Heart right ventricle (tissue), 16 donors: ENCODE measurements at regions of chr4 and their contacts with region 1.

Region 1: DNA sequence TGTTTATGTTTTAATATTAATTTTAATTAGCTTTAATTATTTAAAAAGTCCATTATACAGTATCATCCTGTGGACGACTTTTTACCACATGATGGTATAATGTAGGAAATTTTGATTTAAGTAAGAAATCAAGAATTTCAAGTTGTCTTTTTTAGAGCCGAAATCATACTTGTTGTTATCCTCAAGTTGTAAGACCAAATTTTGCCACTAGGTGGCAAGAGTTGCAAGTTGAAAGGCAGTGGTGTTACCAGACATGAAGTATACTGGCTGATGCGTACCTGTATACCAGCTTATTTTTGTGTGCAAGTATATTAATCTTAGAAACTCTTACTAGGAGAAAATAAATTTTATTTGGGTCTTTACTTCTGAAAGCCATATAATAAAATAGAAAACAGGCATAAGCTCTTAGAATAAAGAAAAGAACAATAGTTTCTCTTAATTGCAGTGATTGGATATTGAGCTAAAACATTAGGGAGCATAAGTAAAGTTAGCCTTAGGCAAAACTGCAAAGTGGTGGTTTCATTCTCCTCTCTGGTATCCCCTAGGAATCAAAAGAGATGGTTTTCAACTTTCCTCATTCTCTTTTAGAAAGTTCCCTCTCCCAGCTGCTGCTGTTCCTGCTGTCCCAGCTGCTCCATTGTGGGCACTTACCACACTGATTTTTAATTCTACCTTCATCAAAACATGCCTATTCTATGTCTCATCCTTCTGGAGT is 118.0 kb upstream of the WDFY3 start:
- DNase-seq: peak in 1 of 2 donors; percentile 55
- ATAC-seq: peak in 4 of 8 donors; percentile 48 to 73 (median 59)
- H3K4me3 ChIP-seq: no peak overlapping the region
- H3K27ac ChIP-seq: no peak overlapping the region
- H3K4me1 ChIP-seq: peaks cover 0 to 6% (median 0%) of the 10 kb centered on the region in 9 donors
- H3K27me3 ChIP-seq: peaks cover 0 to 3% (median 0%) of the 10 kb centered on the region in 7 donors
- CTCF ChIP-seq: peak; percentile 52 to 85 (median 72)

Region 2: GRCh38 chr4:84681486-84682274 is 402.9 kb before region 1 on chr4:
- intact Hi-C with region 1: no loop called
- DNase-seq: peak in 1 of 2 donors; percentile 19
- ATAC-seq: peak; percentile 79 to 92 (median 87)
- H3K4me3 ChIP-seq: no peak overlapping the region
- H3K27ac ChIP-seq: peak overlapping the region in 7 of 10 donors; percentile 25 to 78 (median 42)
- H3K4me1 ChIP-seq: peaks cover 4 to 31% (median 22%) of the 10 kb centered on the region in 9 donors
- H3K27me3 ChIP-seq: no peaks in the 10 kb centered on the region
- CTCF ChIP-seq: peak in 3 of 9 donors; percentile 24 to 31 (median 25)

Region 3: DNA sequence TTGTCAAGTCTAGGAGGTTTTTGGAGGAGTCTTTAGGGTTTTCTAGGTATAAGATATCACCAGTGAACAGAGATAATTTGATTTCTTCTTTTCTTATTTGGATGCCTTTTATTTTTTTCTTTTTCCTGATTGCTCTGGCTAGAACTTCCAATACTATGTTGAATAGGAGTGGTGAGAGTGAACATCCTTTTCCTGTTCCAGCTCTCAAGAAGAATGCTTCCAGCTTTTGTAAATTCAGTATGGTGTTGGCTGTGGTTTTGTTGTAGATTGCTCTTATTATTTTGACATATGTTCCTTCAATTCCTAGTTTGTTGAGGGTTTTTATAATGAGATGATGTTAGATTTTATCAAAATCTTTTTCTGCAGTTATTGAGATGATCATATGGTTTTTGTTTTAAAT is 47.6 kb after region 1 on chr4:
- intact Hi-C with region 1: loop called in 1 of 10 experiments (anchors 5 kb)
- DNase-seq: no peak
- ATAC-seq: peak in 5 of 8 donors; percentile 65 to 87 (median 83)
- H3K4me3 ChIP-seq: no peak overlapping the region
- H3K27ac ChIP-seq: peak overlapping the region in 5 of 10 donors; percentile 53 to 85 (median 61)
- H3K4me1 ChIP-seq: peaks cover 0 to 49% (median 4%) of the 10 kb centered on the region in 9 donors
- H3K27me3 ChIP-seq: no peaks in the 10 kb centered on the region
- CTCF ChIP-seq: no peak

Region 4: GRCh38 chr4:85147439-85148076 is 63.0 kb after region 1 on chr4:
- intact Hi-C with region 1: loop called in 4 of 10 experiments (anchors 5 to 10 kb)
- DNase-seq: peak; percentile 27 to 65
- ATAC-seq: peak in 7 of 8 donors; percentile 54 to 86 (median 82)
- H3K4me3 ChIP-seq: peak overlapping the region in 7 of 10 donors; percentile 18 to 46 (median 28)
- H3K27ac ChIP-seq: peak overlapping the region in 3 of 10 donors; percentile 25 to 57 (median 27)
- H3K4me1 ChIP-seq: peaks cover 0 to 22% (median 11%) of the 10 kb centered on the region in 9 donors
- H3K27me3 ChIP-seq: no peaks in the 10 kb centered on the region
- CTCF ChIP-seq: peak; percentile 38 to 81 (median 72)

Region 5: DNA sequence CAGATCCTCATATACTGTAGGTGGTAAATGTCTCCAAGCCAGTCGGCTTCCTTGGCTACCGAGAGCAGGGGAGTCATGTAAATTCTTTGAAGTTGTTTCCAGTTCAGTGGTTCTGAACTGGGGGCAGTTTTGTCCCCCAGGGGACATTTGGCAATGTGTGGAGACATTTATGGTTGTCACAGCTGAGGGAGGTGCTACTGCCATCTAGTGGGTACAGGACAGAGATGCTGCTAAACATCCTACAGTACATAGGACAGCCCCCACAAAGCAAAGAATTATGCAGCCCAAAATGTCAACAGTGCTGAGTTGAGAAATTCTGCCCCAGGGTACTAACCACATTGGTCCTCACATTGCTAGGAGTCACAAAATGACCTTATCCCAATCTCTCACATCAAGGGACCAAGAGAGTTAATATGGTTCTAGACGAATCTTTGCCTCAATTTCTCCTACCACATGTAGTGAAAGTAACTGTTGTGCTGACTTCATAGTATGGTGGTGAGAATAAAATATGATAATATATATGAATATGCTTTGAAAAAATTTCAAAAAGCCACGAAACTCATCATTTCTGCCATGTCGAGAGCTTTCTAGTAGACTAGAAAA is 286.0 kb after region 1 on chr4:
- intact Hi-C with region 1: loop called in 4 of 10 experiments (anchors 2 to 10 kb)
- DNase-seq: peak in 1 of 2 donors; percentile 49
- ATAC-seq: peak in 7 of 8 donors; percentile 57 to 86 (median 67)
- H3K4me3 ChIP-seq: no peak overlapping the region
- H3K27ac ChIP-seq: no peak overlapping the region
- H3K4me1 ChIP-seq: peaks cover 0 to 32% (median 13%) of the 10 kb centered on the region in 9 donors
- H3K27me3 ChIP-seq: no peaks in the 10 kb centered on the region
- CTCF ChIP-seq: peak; percentile 46 to 79 (median 71)

Region 6: DNA sequence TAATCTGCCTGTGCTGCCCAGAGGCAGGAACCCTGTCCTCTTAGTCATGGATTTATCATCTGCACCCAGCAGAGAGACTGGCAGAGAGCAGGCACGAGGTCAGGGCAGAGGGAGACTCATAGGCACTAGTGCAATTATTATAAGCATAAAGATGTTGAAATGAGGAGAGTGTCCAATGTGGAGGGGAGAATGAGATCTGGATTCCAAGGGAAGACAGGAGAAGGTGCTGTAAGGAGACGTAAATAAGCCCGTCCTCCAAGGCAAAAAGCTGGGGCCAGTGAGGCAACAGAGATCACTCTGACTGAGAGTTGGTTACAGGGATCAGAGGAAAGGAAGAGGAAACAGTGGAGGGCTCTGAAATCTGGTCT is 869.1 kb after region 1 on chr4:
- intact Hi-C with region 1: loop called in 1 of 10 experiments (anchors 10 kb)
- DNase-seq: no peak
- ATAC-seq: peak in 4 of 8 donors; percentile 61 to 90 (median 80)
- H3K4me3 ChIP-seq: no peak overlapping the region
- H3K27ac ChIP-seq: peak overlapping the region in 3 of 10 donors; percentile 1 to 23 (median 5)
- H3K4me1 ChIP-seq: peaks cover 0 to 21% (median 11%) of the 10 kb centered on the region in 9 donors
- H3K27me3 ChIP-seq: no peaks in the 10 kb centered on the region
- CTCF ChIP-seq: no peak

Region 7: GRCh38 chr4:85979276-85979675 is 894.7 kb after region 1 on chr4:
- intact Hi-C with region 1: loop called in 1 of 10 experiments (anchors 10 kb)
- DNase-seq: no peak
- ATAC-seq: no peak
- H3K4me3 ChIP-seq: no peak overlapping the region
- H3K27ac ChIP-seq: no peak overlapping the region
- H3K4me1 ChIP-seq: no peaks in the 10 kb centered on the region
- H3K27me3 ChIP-seq: no peaks in the 10 kb centered on the region
- CTCF ChIP-seq: no peak